Posterior cingulate gyrus (tissue), 11 donors: ENCODE measurements at regions of chr6 and their contacts with region 1.

Region 1: GRCh38 chr6:157823001-157823527 is at the start of gene SNX9:
- DNase-seq: peak; percentile 60 to 96 (median 77)

Region 2: DNA sequence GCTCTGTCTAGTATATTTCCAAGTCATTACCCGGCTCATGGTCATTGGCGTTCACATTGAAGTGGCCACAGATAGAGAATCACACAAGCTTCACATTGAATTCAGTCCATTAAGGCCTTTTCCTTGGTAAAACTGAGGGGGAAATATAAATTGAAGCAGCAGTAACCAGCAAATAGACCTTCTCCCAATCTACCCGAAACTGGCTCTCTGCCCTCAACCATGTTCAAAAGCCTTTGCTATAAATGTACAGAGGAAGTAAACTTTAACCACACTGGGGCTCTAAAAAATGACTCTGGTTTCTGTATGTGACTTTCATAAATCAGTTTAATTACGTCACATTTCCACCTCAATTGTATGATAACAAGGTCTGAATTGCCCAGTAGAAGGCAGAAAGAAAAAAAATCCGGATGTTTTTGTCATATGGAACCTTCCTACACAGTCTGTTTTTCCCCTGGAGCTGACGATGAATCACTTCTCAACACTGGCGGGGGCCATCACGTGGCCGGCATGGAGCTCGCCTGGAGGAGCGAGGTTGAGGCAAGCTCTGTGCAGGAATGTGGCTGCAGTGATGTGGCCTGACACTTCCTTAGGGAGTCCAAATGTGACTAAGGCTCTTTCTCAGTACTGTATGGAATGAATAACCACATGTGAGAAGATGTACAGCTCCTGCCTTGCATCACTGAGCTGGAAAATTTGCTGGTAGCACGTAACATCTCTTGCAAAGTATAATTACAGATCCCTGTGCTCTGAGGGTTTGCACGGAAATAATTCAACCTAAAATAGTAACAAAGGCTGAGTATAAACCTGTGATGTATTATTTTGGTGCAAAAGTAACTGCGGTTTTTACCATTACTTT is 58.7 kb before region 1 on chr6:
- intact Hi-C with region 1: loop called (anchors 5 kb)
- DNase-seq: peak; percentile 42 to 98 (median 81)

Region 3: DNA sequence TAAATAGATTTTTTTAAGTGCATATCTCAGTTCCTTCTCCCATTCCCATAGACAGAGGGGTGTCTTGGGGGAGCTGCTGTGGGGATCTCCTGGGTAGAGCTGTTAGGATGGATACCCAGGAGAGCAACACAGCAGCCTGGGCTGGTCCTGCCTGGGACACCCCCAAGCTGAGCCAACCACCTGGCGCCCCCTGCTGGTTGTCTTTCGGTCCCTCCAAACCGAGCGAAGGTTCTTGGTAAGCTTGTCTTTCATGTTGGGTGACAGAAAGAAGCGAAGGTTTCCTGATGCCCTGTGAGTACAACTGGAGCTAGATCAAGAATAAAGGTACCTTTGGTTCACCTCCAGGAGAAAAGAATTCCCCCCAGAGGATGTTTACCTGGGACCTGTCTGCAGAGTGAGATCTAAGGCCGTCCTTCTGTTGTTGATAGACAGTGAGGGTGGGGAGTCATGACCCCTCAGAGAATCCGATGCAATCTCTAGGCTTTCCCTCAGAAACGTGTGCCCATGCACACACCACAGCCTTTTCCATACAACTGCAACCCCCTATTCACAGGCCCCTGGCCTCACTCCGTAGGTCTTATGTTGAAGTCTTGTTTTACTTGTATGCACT is 50.8 kb after region 1 on chr6:
- intact Hi-C with region 1: loop called (anchors 5 kb)
- DNase-seq: peak; percentile 56 to 95 (median 79)

Region 4: DNA sequence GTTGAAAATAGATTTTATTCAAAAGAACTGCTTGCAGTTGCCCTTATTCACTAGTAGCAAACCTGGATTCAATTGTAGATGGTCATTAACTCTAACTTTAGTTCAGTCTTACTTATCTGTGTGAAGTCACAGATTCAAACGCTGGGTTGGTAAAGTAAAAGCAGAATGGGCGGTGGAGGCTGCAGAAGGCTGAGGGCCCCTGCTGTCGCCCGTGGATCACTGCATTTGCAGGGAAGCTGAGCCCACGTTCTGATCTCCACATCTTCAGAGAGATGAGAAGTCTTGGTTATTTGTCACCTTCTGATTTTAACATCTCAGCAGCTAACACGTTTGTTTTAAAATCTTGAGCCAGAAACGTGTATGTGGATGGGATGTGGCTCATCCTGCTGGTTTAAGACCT is 75.1 kb after region 1 on chr6:
- intact Hi-C with region 1: loop called (anchors 5 kb)
- DNase-seq: peak in 8 of 10 donors; percentile 46 to 96 (median 62)